Motor neuron (in vitro differentiated cells): ENCODE measurements at regions of chr3 and their contacts with region 1.

Region 1: GRCh38 chr3:17431004-17431403 is 311.4 kb downstream of the TBC1D5 start:
- ATAC-seq: peak in 5 of 8 experiments; percentile 50 to 71 (median 54)
- H3K4me3 ChIP-seq: no peak overlapping the region
- H3K27ac ChIP-seq: no peak overlapping the region
- H3K4me1 ChIP-seq: no peaks in the 10 kb centered on the region

Region 2: GRCh38 chr3:17831366-17831765 is 400.4 kb after region 1 on chr3:
- in situ Hi-C with region 1: loop called in 4 of 9 experiments (anchors 10 to 25 kb)
- ATAC-seq: peak in 1 of 8 experiments; percentile 49
- H3K4me3 ChIP-seq: no peak overlapping the region
- H3K27ac ChIP-seq: no peak overlapping the region
- H3K4me1 ChIP-seq: no peaks in the 10 kb centered on the region

Region 3: DNA sequence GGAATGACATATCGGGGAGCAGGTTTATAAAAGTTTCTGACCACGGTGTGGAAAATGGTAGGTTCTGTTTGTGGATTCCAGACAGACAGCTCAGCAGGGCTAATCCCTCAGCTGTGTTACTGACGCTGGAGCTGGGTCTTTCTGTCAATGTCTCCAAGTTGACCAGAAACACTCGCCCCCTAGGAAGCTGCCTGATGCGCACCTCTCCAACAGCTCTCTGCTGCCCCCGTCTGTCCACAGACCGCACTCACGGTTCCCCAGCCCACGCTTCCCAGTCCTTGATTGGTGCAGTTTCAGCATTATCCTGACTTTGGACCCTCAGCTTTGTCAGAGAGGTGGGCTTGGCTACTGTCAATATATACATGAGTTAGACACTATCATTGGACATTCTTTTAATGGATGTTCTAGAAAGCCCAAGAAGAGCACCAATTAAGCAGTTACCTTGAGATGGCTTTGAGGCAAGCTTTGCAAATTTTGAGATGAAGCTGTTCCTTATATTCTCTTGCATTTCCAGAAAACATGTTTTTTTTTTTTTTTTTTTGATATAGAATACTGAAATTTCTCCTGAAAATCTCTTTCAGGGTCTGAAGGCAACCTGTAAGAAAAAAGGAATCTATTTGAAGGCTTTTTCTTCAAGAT is 410.3 kb after region 1 on chr3:
- in situ Hi-C with region 1: loop called in 4 of 9 experiments (anchors 10 to 25 kb)
- ATAC-seq: peak; percentile 78 to 100 (median 84)
- H3K4me3 ChIP-seq: no peak overlapping the region
- H3K27ac ChIP-seq: no peak overlapping the region
- H3K4me1 ChIP-seq: no peaks in the 10 kb centered on the region